Astrocyte of the cerebellum (primary cell): ENCODE measurements at regions of chr2 and their contacts with region 1.

Region 1: DNA sequence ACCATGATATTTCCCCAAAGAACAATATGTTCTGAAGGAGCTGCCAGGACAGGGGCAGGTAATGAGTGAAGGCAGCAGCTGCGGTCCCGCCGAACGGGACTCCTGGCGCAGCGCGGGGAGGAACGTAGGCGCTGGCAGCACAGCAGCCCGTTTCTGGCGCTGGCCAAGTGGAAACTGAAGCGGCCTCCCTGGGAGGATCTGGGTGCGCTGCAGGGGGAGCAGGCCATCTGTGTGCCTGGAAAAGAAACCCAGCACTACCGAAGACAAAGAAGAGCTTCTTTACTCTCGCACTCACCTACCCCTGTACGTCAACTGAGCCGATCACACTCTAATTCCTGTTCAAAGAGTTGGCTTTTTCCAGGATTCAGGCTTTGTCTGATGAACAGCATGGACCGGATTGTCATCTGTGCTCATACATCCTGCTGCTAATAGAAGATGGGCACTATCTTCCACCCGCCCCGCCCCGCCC is 11.8 kb downstream of the G6PC2 start:
- DNase-seq: peak; percentile 18
- H3K4me3 ChIP-seq: peak overlapping the region; percentile 44
- CTCF ChIP-seq: no peak

Region 2: DNA sequence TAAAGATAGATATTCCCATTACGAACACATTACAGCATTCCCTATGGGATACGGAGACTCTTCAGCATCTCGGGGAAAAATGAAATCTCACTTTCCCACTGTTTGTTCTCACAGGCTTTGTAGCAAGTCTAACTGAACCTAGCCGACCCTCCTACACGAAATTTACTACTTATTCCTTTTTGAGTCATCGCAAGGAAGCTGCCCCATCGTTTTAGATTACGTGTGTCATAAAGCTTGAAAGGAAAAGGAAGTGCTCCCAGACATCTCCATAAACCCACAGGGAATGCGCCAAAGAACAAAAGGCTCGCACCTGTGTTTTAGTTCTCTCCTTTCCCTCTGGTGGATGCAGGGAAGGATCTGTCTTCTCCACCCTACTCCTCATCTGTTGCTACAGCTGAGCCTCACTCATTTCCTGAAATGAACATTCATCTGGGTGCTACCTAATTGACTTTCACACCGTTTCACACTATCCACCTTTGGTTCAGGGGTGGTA is 589.4 kb before region 1 on chr2:
- in situ Hi-C with region 1: loop called (anchors 10 kb)
- DNase-seq: no peak
- H3K4me3 ChIP-seq: no peak overlapping the region
- CTCF ChIP-seq: no peak

Region 3: GRCh38 chr2:169479257-169480078 is 566.5 kb after region 1 on chr2 and contains the start of gene BBS5:
- in situ Hi-C with region 1: no loop called
- DNase-seq: peak; percentile 55
- H3K4me3 ChIP-seq: peak within 1 kb of the TSS; percentile 62
- CTCF ChIP-seq: peak; percentile 59